ENCODE measurements at regions of chr12 and their contacts with region 1.

Region 1: GRCh38 chr12:56636675-56637540 is 6.8 kb upstream of the BAZ2A start:
- DNase-seq: peak; percentile 98

Region 2: GRCh38 chr12:56521590-56522371 is 115.1 kb before region 1 on chr12 and contains the start of gene RBMS2:
- intact Hi-C with region 1: loop called (anchors 2 kb)
- DNase-seq: peak; percentile 82
- total RNA-seq, gene RBMS2: 23.0 TPM

Region 3: DNA sequence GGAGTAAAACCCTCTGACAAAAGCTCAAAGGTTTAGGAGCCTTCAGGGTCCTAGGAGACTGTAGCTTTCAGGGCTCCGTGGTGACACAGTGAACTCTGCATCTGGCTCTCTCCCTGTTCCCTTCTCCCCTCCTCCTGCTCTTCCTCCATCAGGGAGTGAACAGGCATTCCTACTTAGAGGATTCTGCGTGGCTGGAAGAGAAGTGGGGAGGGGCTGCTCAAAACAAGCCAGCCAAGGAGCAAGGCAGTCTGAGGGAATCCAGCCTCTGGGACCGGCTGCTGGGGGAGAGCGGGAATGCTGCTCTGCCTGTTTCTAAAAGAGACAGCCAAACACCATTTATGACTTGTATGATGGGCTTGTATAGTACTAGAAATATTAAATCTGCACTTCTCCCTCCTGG is 65.8 kb before region 1 on chr12:
- intact Hi-C with region 1: loop called (anchors 5 kb)
- DNase-seq: no peak

Region 4: DNA sequence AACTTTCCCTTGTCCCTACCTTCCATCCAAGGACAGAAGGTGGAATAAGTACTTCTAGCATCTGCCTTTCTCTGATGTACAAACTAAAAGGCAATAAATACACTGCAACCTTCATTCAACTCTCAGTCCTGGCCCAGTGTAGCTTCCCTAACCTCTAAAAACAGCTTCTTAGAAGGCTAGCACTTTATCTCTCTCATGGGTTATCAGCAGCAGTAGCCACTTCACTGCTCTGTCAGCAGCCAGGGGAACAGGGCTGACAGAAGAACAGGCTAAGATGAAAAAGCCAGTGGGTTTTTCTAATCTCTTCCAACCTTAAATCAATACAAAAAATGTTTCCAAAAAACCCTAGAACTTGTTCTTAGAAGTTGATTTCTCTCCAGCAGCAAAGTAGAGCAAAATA is 20.0 kb before region 1 on chr12:
- intact Hi-C with region 1: loop called (anchors 2 kb)
- DNase-seq: no peak

Region 5: GRCh38 chr12:56688129-56688845 is 51.4 kb after region 1 on chr12 and contains the start of gene PTGES3:
- intact Hi-C with region 1: loop called (anchors 2 kb)
- DNase-seq: peak; percentile 97
- total RNA-seq, gene PTGES3: 121 TPM

Region 6: GRCh38 chr12:56724972-56725722 is 88.2 kb after region 1 on chr12 and contains the start of gene NACA:
- intact Hi-C with region 1: loop called (anchors 2 kb)
- DNase-seq: peak; percentile 100
- total RNA-seq, gene NACA: 441 TPM